Ascending aorta (tissue), 2 donors: ENCODE measurements at regions of chr2 and their contacts with region 1.

Region 1: GRCh38 chr2:60707750-60708371 is 48.2 kb upstream of the PAPOLG start:
- DNase-seq: no peak
- H3K4me3 ChIP-seq: no peak overlapping the region
- H3K27ac ChIP-seq: no peak overlapping the region
- H3K4me1 ChIP-seq: no peaks in the 10 kb centered on the region
- H3K27me3 ChIP-seq: no peaks in the 10 kb centered on the region
- CTCF ChIP-seq: peak; percentile 36 to 69 (median 58)

Region 2: GRCh38 chr2:60998628-60999545 is 291.0 kb after region 1 on chr2:
- intact Hi-C with region 1: loop called (anchors 2 kb)
- DNase-seq: no peak
- H3K4me3 ChIP-seq: no peak overlapping the region
- H3K27ac ChIP-seq: no peak overlapping the region
- H3K4me1 ChIP-seq: no peaks in the 10 kb centered on the region
- H3K27me3 ChIP-seq: no peaks in the 10 kb centered on the region
- CTCF ChIP-seq: peak; percentile 48 to 59 (median 51)